ENCODE measurements at regions of chr1 and their contacts with region 1.

Region 1: GRCh38 chr1:86913896-86914634 is at the start of gene SELENOF:
- DNase-seq: peak; percentile 99
- H3K4me3 Mint-ChIP-seq: no peak within 1 kb of the TSS
- H3K27ac Mint-ChIP-seq: no peak within 1 kb of the TSS
- H3K4me1 Mint-ChIP-seq: peaks cover 42% of the 10 kb centered on the region
- H3K27me3 Mint-ChIP-seq: no peaks in the 10 kb centered on the region
- total RNA-seq, gene SELENOF: 178 to 180 TPM

Region 2: GRCh38 chr1:87045761-87046304 is 131.8 kb after region 1 on chr1:
- CTCF ChIA-PET with region 1: interaction called, 3 read pairs
- POLR2A ChIA-PET with region 1: interaction called, 12 read pairs
- DNase-seq: peak; percentile 29
- H3K4me3 Mint-ChIP-seq: no peak overlapping the region
- H3K27ac Mint-ChIP-seq: peak overlapping the region; percentile 46
- H3K4me1 Mint-ChIP-seq: peaks cover 23% of the 10 kb centered on the region
- H3K27me3 Mint-ChIP-seq: no peaks in the 10 kb centered on the region